Right lobe of liver (tissue), 6 donors: ENCODE measurements at regions of chr5 and their contacts with region 1.

Region 1: GRCh38 chr5:141883184-141883891 is 5.1 kb upstream of the PCDH1 start:
- DNase-seq: no peak
- ATAC-seq: no peak
- H3K4me3 ChIP-seq: no peak overlapping the region
- H3K27ac ChIP-seq: no peak overlapping the region
- H3K4me1 ChIP-seq: peaks cover 0 to 4% (median 0%) of the 10 kb centered on the region in 4 donors
- H3K27me3 ChIP-seq: no peaks in the 10 kb centered on the region
- CTCF ChIP-seq: no peak
- POLR2A ChIP-seq: no peak

Region 2: GRCh38 chr5:141958113-141958512 is 74.8 kb after region 1 on chr5 and contains the start of gene PCDH12:
- intact Hi-C with region 1: loop called in 1 of 2 experiments (anchors 5 kb)
- DNase-seq: peak in 1 of 3 donors; percentile 54
- ATAC-seq: peak; percentile 52 to 67 (median 58)
- H3K4me3 ChIP-seq: peak within 1 kb of the TSS; percentile 4 to 33 (median 6)
- H3K27ac ChIP-seq: peak within 1 kb of the TSS in 1 of 3 donors; percentile 17
- H3K4me1 ChIP-seq: peaks cover 0 to 3% (median 0%) of the 10 kb centered on the region in 4 donors
- H3K27me3 ChIP-seq: no peaks in the 10 kb centered on the region
- CTCF ChIP-seq: no peak
- POLR2A ChIP-seq: no peak
- total RNA-seq, gene PCDH12: 1.5 to 4.4 (median 1.9) TPM